Calu3 (cell line): ENCODE measurements at regions of chr7 and their contacts with region 1.

Region 1: DNA sequence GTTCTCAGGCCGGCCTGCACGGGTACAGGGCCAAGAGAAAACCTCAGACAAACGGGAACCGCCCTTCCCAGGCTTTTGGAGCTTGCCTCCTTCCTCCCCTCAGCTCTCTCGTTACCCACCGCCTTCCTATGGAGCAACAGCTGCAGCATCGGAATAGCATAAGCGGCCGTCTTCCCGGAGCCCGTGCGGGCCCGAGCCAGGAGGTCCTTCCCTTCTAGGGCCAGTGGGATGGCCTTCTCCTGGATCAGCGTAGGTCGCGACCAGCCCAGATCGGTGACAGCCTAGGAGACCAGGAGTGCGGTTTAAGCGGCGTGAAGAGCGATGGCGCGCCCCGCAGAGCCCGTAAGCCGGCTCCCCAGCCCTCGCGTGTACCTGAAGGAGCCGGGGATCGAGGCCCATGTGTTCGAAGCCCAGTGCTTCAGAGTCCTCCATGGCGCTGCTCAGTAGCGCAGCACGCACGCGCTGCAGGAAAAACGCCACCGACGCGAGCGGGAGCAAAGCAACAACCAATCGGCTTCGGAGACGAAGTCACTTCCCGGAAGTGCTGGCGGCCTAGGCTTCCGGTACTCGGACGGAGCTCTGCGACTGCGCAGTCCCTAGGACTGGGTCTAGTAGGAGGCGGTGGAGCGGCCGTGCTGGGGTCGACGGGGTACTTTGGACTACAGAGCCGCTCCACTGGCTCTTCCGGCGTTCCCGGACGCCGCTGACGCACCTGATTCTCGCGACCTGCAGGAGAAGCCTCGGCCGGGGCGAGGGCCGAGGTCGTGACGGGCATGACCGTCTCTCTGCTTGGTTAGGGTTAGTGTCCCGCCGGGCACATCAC is at the start of gene DDX56:
- DNase-seq: peak; percentile 97
- H3K4me3 Mint-ChIP-seq: peak within 1 kb of the TSS; percentile 93
- H3K27ac Mint-ChIP-seq: peak within 1 kb of the TSS; percentile 86
- H3K4me1 Mint-ChIP-seq: peaks cover 26% of the 10 kb centered on the region
- H3K27me3 Mint-ChIP-seq: no peaks in the 10 kb centered on the region
- CTCF ChIP-seq: no peak
- total RNA-seq, gene DDX56: 157 and 168 TPM in 2 replicates

Region 2: DNA sequence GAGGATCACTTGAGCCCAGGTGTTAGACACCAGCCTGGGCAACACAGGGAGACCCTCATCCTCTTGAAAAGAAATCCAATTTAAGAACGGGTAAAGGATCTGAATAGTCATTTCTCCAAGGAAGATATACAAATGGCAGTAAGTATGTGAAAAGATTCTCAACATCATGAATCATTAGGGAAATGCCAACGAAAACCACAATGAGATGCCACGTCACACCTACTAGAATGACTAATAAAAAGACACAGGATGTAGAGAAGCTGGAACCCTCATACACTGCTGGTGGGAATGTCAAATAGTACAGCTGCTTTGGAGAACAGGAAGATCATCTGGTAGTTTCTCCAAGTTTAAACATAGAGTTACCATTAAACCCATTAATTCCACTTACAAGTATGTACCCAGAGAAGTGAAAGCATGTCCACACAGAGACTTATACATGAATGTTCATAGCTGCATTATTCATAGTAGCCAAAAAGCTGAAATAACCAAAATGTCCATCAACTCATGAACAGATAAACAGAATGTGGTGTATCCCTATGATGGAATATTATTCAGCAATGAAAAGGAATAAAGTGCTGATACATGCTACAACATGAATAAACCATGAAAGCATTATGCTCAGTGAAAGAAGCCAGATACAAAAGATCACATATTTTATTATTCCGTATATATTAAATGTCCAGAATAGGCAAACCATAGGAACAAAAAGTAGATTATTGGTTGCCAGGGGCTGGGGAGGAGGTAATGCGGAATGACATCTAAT is 161.9 kb after region 1 on chr7:
- CTCF ChIA-PET with region 1: no interaction called
- intact Hi-C with region 1: no loop called
- DNase-seq: peak; percentile 70
- H3K4me3 Mint-ChIP-seq: peak overlapping the region; percentile 37
- H3K27ac Mint-ChIP-seq: peak overlapping the region; percentile 95
- H3K4me1 Mint-ChIP-seq: peaks cover 38% of the 10 kb centered on the region
- H3K27me3 Mint-ChIP-seq: no peaks in the 10 kb centered on the region
- CTCF ChIP-seq: no peak

Region 3: GRCh38 chr7:45494885-45495284 is 921.2 kb after region 1 on chr7:
- CTCF ChIA-PET with region 1: no interaction called
- intact Hi-C with region 1: loop called (anchors 5 kb)
- DNase-seq: no peak
- H3K4me3 Mint-ChIP-seq: no peak overlapping the region
- H3K27ac Mint-ChIP-seq: no peak overlapping the region
- H3K4me1 Mint-ChIP-seq: no peaks in the 10 kb centered on the region
- H3K27me3 Mint-ChIP-seq: peaks cover 94% of the 10 kb centered on the region
- CTCF ChIP-seq: no peak